ENCODE measurements at regions of chr2 and their contacts with region 1.

Region 1: GRCh38 chr2:208326016-208326415 is 60.0 kb downstream of the PIKFYVE start:
- DNase-seq: no peak
- ATAC-seq: no peak
- H3K4me3 Mint-ChIP-seq: no peak overlapping the region
- H3K27ac Mint-ChIP-seq: no peak overlapping the region
- H3K4me1 Mint-ChIP-seq: peaks cover 48% of the 10 kb centered on the region
- H3K27me3 Mint-ChIP-seq: no peaks in the 10 kb centered on the region
- CTCF ChIP-seq: no peak

Region 2: DNA sequence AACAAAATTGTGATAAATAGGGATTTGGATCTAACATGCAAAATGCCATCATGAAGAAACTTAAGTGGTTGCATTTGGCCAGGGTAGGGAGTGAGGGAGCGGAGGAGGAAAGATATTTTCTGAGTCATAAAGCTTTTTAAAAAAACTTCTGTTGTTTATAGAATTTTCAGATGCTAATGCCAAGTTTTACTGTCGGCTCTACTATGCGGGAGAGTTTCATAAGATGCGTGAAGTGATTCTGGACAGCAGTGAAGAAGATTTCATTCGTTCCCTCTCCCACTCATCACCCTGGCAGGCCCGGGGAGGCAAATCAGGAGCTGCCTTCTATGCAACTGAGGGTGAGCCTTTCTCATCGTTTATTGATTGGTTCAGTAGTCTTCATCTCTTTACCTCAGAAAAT is 24.6 kb after region 1 on chr2:
- CTCF ChIA-PET with region 1: no interaction called
- POLR2A ChIA-PET with region 1: interaction called, 3 read pairs
- intact Hi-C with region 1: loop called (anchors 2 kb)
- DNase-seq: no peak
- ATAC-seq: no peak
- H3K4me3 Mint-ChIP-seq: no peak overlapping the region
- H3K27ac Mint-ChIP-seq: no peak overlapping the region
- H3K4me1 Mint-ChIP-seq: no peaks in the 10 kb centered on the region
- H3K27me3 Mint-ChIP-seq: no peaks in the 10 kb centered on the region
- CTCF ChIP-seq: no peak

Measured in activated B cell treated with CpG ODN at 0.5 μM for 24 hours (primary cell).